Cardiac septum (tissue), 1 donor: ENCODE measurements at regions of chr5 and their contacts with region 1.

Region 1: GRCh38 chr5:157312492-157312891 is 46.6 kb downstream of the CYFIP2 start:
- DNase-seq: no peak

Region 2: DNA sequence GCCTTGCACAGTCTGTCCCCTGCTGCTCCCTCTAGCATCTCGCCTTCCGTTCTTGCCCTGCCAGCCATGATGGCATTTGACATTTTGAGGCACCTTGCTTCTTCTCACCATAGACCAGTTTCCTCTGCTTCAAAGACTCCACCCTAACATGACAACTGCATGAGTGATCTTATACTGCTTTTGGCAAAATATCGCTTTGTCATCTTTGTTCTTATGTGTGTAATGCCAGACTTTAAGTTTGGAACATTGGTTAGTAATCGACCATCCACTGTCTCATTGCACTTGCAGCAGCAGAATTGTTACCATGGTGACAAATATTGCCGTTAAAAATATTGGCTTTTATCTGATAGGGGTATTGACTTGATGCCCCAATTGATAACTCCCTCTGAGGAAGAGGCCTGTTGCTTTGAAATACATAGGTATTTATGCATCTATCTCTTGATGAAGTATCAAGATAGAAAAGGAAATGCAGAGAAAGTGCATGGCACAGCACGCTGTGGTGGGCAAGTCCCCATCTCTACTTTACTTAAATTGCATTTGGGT is 153.2 kb before region 1 on chr5:
- intact Hi-C with region 1: loop called (anchors 10 kb)
- DNase-seq: no peak

Region 3: GRCh38 chr5:157253547-157253946 is 58.9 kb before region 1 on chr5:
- intact Hi-C with region 1: loop called (anchors 2 kb)
- DNase-seq: peak; percentile 54